HepG2 (cell line): ENCODE measurements at regions of chr2 and their contacts with region 1.

Region 1: DNA sequence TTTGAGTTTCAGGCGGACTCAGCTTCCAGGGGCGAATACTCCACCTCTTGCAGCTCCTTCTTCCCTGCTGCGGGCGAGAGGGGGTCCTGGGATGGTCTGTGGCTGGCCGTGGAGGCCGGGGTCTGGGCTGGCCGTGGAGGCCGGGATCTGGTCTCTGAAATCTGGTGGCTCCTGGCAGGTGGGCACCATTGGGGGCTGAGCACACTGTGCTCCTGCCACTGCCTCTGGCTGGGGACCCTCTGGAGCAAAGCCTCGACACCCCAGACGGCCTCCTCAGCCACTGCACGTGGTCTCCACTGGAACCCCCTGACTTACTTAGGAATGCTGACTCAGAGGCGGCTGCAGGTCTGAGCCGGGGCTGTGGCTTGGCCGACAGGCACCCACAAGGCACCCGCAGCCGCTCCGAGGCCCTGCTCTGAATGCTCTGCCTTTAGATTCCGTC is 100.1 kb upstream of the ALKAL2 start:
- DNase-seq: no peak
- ATAC-seq: no peak
- H3K4me3 ChIP-seq: no peak overlapping the region
- H3K27ac ChIP-seq: no peak overlapping the region
- H3K4me1 ChIP-seq: no peaks in the 10 kb centered on the region
- H3K27me3 ChIP-seq: peaks cover 5 to 46% of the 10 kb centered on the region in 2 experiments; a peak in 4 of 5 replicates
- CTCF ChIP-seq: no peak
- EP300 ChIP-seq: no peak
- POLR2A ChIP-seq: no peak
- RAD21 ChIP-seq: no peak

Region 2: DNA sequence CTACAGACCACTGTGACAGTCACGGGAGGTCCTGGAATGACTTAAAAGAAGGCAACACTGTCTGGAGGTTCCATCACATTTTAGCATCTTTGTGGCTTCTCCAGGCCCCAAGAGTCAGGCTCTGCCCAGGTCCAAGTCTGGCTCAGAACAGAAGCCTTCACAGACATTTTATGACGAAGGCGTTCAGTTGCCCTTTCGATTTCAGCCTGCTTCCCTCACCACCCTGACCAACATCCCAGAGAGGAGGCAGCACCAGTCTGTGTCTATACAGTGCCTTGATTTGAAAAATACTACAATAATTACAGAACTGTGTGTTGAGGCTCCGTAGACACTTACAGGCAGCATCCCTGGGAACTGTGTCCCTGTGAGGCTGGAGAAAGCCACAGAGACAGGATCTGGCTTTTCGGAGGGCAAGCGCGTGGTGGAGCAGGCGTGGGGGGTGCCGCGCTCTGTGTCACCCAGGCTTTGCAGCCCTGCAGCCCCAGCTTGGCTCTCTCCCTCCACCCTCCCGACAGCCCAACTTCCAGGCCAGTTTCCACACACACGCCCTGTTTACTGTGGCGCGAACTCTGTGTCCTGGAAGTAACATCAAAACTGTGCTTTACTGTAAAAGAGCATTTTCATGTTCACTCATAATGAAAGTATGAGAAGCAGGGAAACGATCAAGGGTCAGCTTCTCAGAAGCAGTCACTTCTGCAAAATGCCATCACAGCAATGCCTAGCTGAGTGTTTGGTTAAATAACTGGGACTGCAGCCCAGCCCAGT is 53.4 kb after region 1 on chr2:
- CTCF ChIA-PET with region 1: no interaction called
- POLR2A ChIA-PET with region 1: no interaction called
- in situ Hi-C with region 1: no loop called
- intact Hi-C with region 1: loop called (anchors 2 kb)
- DNase-seq: no peak
- ATAC-seq: peak; percentile 23; the same call in 2 of the 3 replicates
- H3K4me3 ChIP-seq: no peak overlapping the region
- H3K27ac ChIP-seq: no peak overlapping the region
- H3K4me1 ChIP-seq: no peaks in the 10 kb centered on the region
- H3K27me3 ChIP-seq: peaks cover 6 to 59% of the 10 kb centered on the region in 2 experiments
- CTCF ChIP-seq: no peak
- EP300 ChIP-seq: no peak
- POLR2A ChIP-seq: no peak
- RAD21 ChIP-seq: no peak